Heart right ventricle (tissue), 16 donors: ENCODE measurements at regions of chr12 and their contacts with region 1.

Region 1: GRCh38 chr12:53321074-53321814 is at the start of gene AAAS:
- DNase-seq: peak; percentile 95 to 96
- ATAC-seq: peak; percentile 87 to 94 (median 91)
- H3K4me3 ChIP-seq: peak within 1 kb of the TSS; percentile 26 to 79 (median 67)
- H3K27ac ChIP-seq: peak within 1 kb of the TSS; percentile 69 to 94 (median 86)
- H3K4me1 ChIP-seq: peaks cover 11 to 50% (median 37%) of the 10 kb centered on the region in 9 donors
- H3K27me3 ChIP-seq: peaks cover 0 to 8% (median 0%) of the 10 kb centered on the region in 7 donors
- CTCF ChIP-seq: peak; percentile 97 to 100 (median 100)
- total RNA-seq, gene AAAS: 33.5 to 42.2 (median 34.9) TPM

Region 2: DNA sequence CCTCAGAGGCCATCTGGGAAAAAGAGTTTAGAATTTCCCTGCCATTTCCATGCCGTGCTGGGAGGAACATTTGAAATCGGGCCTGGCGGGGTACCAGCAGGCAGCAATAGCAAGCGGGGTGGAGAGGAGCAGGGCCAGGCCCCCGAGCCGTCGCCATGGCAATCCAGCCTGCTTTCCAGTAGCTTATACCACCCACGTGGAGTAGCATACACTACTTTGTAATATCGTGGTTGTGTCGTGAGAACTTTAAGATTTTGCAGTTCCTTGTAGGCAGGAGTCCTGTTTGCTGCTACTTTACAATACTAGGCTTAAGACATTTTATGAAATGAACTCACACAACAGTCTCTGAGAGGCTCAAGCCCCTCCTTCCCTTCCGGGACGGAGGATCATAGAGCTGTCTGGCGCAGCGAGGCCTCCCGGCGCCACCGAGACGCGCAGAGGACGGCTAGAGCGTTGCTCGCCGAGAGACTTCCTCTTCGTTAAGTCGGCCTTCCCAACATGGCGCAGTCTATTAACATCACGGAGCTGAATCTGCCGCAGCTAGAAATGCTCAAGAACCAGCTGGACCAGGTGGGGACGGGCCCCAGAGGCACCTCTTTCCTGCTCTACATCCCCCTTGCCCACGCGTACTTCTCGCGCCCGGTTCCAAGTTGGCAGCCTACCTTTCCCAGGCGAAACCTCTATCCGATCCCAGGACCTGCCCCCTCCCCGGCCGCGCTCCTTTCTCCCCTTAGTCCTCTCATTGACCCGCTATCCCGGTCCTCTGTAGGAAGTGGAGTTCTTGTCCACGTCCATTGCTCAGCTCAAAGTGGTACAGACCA is 26.0 kb before region 1 on chr12 and contains the start of gene PFDN5:
- intact Hi-C with region 1: loop called in 1 of 10 experiments (anchors 1 kb)
- DNase-seq: peak; percentile 87 to 91
- ATAC-seq: peak; percentile 89 to 94 (median 92)
- H3K4me3 ChIP-seq: peak within 1 kb of the TSS; percentile 69 to 93 (median 82)
- H3K27ac ChIP-seq: peak within 1 kb of the TSS; percentile 14 to 93 (median 89)
- H3K4me1 ChIP-seq: peaks cover 11 to 48% (median 40%) of the 10 kb centered on the region in 9 donors
- H3K27me3 ChIP-seq: no peaks in the 10 kb centered on the region
- CTCF ChIP-seq: peak in 3 of 9 donors; percentile 11 to 25 (median 23)
- total RNA-seq, gene PFDN5: 307 to 413 (median 339) TPM

Region 3: DNA sequence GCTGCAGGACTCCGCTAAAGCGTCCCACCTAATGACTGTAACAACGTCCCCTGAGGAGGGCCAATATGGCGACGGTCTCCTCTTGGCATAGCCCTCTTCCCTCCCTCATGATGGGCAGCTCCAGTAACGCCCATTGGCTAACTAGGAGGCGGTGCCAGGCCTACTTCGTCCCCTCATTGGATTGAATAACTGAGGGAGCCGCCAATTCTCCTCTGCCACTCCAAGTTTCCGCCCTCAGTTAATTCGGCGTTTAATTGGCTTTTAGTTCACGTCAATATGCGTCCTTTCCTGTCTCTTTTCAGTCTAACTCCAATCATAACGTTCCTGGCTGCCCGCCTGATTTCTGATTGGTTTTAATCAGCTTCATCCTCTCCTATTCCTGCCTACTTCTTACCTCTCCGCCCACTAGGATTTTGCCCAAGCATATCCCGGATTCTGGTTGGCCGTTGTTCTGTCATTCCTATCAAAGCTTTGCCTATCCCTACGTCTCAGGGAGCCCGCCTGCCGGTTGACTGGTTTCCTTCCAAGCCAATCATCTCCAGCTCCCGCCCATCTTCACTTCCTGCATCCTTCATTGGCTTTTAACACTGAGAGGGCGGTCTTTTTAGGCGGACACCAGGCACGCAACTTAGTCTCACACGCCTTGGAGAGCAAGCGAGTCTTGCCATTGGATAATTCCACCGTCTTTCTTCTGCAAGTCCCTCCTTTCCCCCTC is 58.3 kb after region 1 on chr12:
- intact Hi-C with region 1: loop called in 1 of 10 experiments (anchors 5 kb)
- DNase-seq: peak; percentile 92 to 100
- ATAC-seq: peak; percentile 84 to 92 (median 90)
- H3K4me3 ChIP-seq: peak overlapping the region; percentile 44 to 88 (median 64)
- H3K27ac ChIP-seq: peak overlapping the region; percentile 92 to 99 (median 98)
- H3K4me1 ChIP-seq: peaks cover 18 to 46% (median 44%) of the 10 kb centered on the region in 9 donors
- H3K27me3 ChIP-seq: no peaks in the 10 kb centered on the region
- CTCF ChIP-seq: no peak

Region 4: DNA sequence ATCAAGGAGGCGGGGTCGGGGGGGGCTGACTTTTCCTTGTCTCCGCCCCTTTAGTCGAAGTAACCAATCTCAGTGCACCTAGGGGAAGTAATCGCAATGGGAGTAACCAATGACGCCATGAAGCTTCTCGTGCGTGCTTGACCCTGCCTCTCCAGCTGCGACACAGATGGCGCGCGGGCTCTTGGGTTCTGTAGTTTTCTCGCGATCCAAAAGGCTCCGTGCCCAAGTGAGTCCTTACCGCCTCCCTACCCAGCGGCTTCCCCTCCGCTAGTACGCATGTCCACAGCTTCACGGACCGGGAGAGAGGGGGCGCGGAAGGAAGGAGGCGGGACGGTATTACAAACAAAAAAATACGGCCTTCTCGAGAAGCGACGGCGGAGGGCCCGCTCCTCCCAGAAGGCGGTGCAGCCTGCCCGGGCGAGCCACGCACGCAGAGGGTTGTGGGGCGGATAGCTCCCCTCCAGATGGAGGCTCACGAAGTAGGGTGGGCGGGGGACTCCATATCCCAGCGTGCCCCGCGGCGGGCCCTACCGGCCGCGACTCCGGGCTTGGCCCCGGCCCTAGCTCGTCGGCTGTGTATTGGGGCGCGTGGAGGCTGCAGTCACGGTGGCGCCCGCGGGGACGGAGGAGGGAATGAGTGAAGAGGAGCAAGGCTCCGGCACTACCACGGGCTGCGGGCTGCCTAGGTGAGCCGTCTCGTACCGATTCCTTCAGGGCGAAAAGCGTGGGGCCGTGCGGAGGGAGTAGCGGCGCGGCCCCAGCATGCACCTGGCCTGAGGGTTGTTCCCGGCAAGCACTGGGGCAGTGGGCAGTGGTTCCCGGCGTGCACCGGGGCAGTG is 179.8 kb after region 1 on chr12 and contains the start of gene TARBP2:
- intact Hi-C with region 1: loop called in 3 of 10 experiments (anchors 5 to 10 kb)
- DNase-seq: peak; percentile 96 to 99
- ATAC-seq: peak; percentile 87 to 93 (median 89)
- H3K4me3 ChIP-seq: peak within 1 kb of the TSS; percentile 44 to 87 (median 74)
- H3K27ac ChIP-seq: peak within 1 kb of the TSS; percentile 96 to 99 (median 97)
- H3K4me1 ChIP-seq: peaks cover 15 to 55% (median 33%) of the 10 kb centered on the region in 9 donors
- H3K27me3 ChIP-seq: no peaks in the 10 kb centered on the region
- CTCF ChIP-seq: peak in 3 of 9 donors; percentile 17 to 26 (median 21)
- total RNA-seq, gene TARBP2: 7.0 to 13.7 (median 11.0) TPM

Region 5: GRCh38 chr12:53806721-53807120 is 485.5 kb after region 1 on chr12:
- intact Hi-C with region 1: no loop called
- DNase-seq: no peak
- ATAC-seq: no peak
- H3K4me3 ChIP-seq: no peak overlapping the region
- H3K27ac ChIP-seq: no peak overlapping the region
- H3K4me1 ChIP-seq: no peaks in the 10 kb centered on the region
- H3K27me3 ChIP-seq: peaks cover 0 to 77% (median 71%) of the 10 kb centered on the region in 7 donors
- CTCF ChIP-seq: no peak